ENCODE measurements at regions of chr7 and their contacts with region 1.

Region 1: GRCh38 chr7:15305002-15305600 is 256.7 kb downstream of the AGMO start:
- DNase-seq: peak in 1 of 2 donors; percentile 39
- ATAC-seq: peak; percentile 64

Region 2: DNA sequence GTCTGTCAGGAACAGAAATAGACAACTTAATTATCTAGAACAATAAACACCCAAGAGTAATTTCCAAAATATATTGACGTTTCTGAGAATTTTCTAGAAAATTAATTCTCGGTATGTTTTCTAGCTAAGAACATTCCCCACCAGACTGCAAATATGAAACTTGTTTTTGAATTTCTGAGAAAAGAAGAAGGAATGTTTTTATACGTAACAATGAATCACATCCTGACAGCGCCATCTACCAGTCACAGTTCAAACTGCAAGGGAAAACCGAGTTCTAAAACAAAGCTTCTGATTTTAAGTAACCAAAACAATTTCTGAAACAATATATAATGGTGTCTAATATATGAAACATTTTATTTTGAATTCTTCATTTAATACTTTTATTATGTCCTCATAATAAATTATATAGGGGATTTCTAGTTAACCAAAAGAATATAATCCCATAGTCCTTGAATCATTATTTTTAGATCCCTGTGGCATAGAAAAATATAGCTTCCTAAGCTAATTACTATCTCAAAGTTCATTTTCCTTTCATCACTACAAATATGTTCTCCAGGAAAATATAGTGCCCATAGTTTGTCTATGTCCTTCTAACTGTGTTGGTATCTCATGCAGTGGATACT is 415.9 kb after region 1 on chr7:
- intact Hi-C with region 1: loop called in 1 of 2 experiments (anchors 2 kb)
- DNase-seq: peak in 1 of 2 donors; percentile 30
- ATAC-seq: no peak

Region 3: DNA sequence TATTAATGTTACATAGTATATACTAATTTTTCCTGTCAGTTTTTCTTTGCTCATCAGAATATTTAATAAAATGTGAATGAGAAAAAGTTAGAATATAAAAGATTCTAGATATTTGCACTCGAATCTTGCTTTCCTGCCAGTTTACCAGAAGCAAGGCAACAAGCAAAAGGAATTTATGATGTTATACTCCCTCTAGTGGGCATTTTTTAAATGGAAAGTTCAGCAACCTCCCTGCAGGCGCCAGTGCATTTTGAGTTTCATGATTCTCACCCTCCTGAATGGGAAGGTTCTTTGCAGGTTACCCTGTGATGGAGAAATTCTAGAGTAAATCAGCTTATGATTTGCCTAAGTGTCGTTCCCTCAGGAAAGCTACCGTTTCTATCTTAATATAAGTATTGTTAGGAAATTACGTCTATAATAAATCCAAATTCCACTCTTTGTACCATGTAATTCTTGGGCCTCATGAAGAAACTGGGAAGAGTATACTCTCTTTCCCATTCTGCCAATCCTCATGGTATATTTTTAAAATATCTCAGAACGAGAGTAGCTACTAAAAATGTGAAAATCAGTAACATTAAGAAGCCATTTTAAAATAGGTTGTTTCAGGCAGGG is 766.3 kb after region 1 on chr7:
- intact Hi-C with region 1: loop called in 1 of 2 experiments (anchors 10 kb)
- DNase-seq: no peak
- ATAC-seq: peak; percentile 57